Activated CD4-positive, alpha-beta T cell treated with anti-CD3 and anti-CD28 coated beads, Interleukin-2, amount 10 ng/mL, durations not matched to agents 24 days and 14 days (primary cell): ENCODE measurements at regions of chr6 and their contacts with region 1.

Region 1: GRCh38 chr6:157830354-157831017 is 7.4 kb downstream of the SNX9 start:
- DNase-seq: peak; percentile 53
- H3K4me3 Mint-ChIP-seq: no peak overlapping the region
- H3K27ac Mint-ChIP-seq: peak overlapping the region; percentile 15
- H3K4me1 Mint-ChIP-seq: peaks cover 44% of the 10 kb centered on the region
- H3K27me3 Mint-ChIP-seq: peaks cover 2% of the 10 kb centered on the region

Region 2: GRCh38 chr6:157845493-157846259 is 15.2 kb after region 1 on chr6:
- intact Hi-C with region 1: loop called (anchors 2 kb)
- DNase-seq: no peak
- H3K4me3 Mint-ChIP-seq: peak overlapping the region; percentile 7
- H3K27ac Mint-ChIP-seq: no peak overlapping the region
- H3K4me1 Mint-ChIP-seq: peaks cover 46% of the 10 kb centered on the region
- H3K27me3 Mint-ChIP-seq: no peaks in the 10 kb centered on the region

Region 3: DNA sequence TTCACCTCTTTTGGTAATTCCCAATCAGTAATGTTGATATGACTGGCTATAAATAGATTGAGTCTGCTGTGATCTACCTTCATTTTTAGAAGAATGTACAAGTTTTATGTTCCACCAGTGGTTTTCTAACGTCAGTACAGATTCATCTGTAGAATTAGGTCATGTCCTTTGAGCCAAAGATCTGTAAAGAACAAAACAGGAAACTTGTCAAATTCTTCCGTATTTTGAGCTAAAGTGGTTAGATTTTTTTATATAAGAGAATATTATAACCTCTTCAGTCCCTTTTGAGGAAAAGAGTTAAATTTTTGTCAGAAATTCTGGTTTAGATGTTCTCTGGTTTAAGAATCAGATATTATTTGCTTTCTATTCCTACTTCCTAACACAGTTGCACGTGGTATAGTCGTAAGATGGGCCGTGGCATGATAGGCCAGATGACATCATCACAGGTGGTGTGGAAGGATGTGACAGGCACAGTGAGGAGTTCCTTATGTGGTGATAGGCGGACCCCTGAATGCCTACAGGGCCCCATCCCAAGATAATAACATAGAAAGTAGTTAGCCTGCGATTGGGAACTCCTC is 54.8 kb after region 1 on chr6:
- intact Hi-C with region 1: loop called (anchors 5 kb)
- DNase-seq: peak; percentile 88
- H3K4me3 Mint-ChIP-seq: peak overlapping the region; percentile 28
- H3K27ac Mint-ChIP-seq: peak overlapping the region; percentile 83
- H3K4me1 Mint-ChIP-seq: peaks cover 41% of the 10 kb centered on the region
- H3K27me3 Mint-ChIP-seq: no peaks in the 10 kb centered on the region

Region 4: DNA sequence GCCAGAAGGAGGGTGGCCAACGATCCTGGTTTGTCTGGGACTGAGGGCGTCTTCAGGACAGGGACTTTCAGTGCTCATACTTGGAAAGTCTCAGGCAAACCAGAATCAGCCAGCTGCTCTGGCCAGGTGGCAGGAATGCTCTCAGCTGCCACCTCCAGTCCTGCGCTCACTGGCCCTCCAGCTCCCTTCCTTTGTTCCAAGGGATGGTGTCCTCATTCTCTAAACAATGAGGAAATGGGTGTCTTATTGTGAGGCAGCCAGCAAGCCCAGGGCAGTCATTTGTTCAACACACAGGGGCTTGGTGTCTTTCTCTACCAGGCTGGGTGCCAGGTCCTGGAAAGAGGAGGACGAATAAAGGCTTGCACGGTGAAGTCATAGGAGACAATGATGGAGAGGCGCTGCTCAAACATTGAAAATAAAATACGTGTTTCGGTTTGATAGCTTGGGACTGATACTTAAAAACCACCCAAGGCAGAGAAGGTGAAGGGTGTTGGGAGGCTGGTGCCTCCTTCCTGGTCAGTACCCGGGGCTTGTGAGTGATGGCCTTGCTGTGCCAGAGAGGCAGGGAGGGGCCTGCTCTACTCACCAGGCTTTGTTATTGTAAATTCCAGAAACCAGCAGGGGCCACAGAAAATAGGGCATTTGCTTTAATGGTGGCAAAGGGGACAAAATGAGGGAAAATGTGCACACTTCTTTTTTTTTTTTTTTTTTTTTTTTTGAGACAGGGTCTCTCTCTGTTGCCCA is 718.1 kb after region 1 on chr6:
- intact Hi-C with region 1: no loop called
- DNase-seq: no peak
- H3K4me3 Mint-ChIP-seq: no peak overlapping the region
- H3K27ac Mint-ChIP-seq: no peak overlapping the region
- H3K4me1 Mint-ChIP-seq: peaks cover 2% of the 10 kb centered on the region
- H3K27me3 Mint-ChIP-seq: peaks cover 12% of the 10 kb centered on the region